GM12878 (cell line): ENCODE measurements at regions of chr11 and their contacts with region 1.

Region 1: GRCh38 chr11:106553304-106553703 is 465.0 kb downstream of the GUCY1A2 start:
- DNase-seq: no peak
- ATAC-seq: no peak
- H3K4me3 ChIP-seq: no peak overlapping the region
- H3K27ac ChIP-seq: no peak overlapping the region
- H3K4me1 ChIP-seq: no peaks in the 10 kb centered on the region
- H3K27me3 ChIP-seq: no peaks in the 10 kb centered on the region
- CTCF ChIP-seq: no peak
- EP300 ChIP-seq: no peak
- POLR2A ChIP-seq: no peak
- RAD21 ChIP-seq: no peak

Region 2: GRCh38 chr11:105693075-105693759 is 860.1 kb before region 1 on chr11:
- CTCF ChIA-PET with region 1: no interaction called
- POLR2A ChIA-PET with region 1: no interaction called
- RAD21 ChIA-PET with region 1: no interaction called
- SMC1A ChIA-PET with region 1: no interaction called
- in situ Hi-C with region 1: no loop called
- intact Hi-C with region 1: no loop called
- DNase-seq: no peak
- ATAC-seq: no peak
- H3K4me3 ChIP-seq: no peak overlapping the region
- H3K27ac ChIP-seq: no peak overlapping the region
- H3K4me1 ChIP-seq: no peaks in the 10 kb centered on the region
- H3K27me3 ChIP-seq: no peaks in the 10 kb centered on the region
- CTCF ChIP-seq: no peak
- EP300 ChIP-seq: no peak
- POLR2A ChIP-seq: no peak
- RAD21 ChIP-seq: no peak

Region 3: DNA sequence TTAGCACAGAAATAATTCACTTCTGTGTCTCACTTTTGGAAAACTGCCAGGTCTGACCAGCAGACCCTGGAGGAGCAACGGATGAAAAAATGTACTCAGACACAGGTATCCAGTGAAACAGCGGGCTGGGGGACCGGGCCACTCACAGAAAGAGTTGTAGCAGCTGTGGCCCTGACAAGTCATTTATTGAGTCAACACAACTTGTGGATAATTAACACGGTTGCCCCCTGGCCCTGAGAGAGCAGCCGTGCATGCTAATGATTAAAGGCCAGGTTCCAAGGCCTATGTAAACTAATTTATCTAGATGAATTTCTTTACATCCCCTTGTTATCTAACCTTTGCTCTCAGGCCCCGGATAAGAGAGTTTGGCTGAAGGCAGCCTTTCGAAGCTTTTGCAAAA is 344.5 kb before region 1 on chr11:
- CTCF ChIA-PET with region 1: no interaction called
- POLR2A ChIA-PET with region 1: no interaction called
- RAD21 ChIA-PET with region 1: no interaction called
- SMC1A ChIA-PET with region 1: no interaction called
- in situ Hi-C with region 1: no loop called
- intact Hi-C with region 1: no loop called
- DNase-seq: no peak
- ATAC-seq: peak; percentile 57
- H3K4me3 ChIP-seq: no peak overlapping the region
- H3K27ac ChIP-seq: no peak overlapping the region
- H3K4me1 ChIP-seq: no peaks in the 10 kb centered on the region
- H3K27me3 ChIP-seq: no peaks in the 10 kb centered on the region
- CTCF ChIP-seq: no peak
- EP300 ChIP-seq: no peak
- POLR2A ChIP-seq: no peak
- RAD21 ChIP-seq: no peak

Region 4: DNA sequence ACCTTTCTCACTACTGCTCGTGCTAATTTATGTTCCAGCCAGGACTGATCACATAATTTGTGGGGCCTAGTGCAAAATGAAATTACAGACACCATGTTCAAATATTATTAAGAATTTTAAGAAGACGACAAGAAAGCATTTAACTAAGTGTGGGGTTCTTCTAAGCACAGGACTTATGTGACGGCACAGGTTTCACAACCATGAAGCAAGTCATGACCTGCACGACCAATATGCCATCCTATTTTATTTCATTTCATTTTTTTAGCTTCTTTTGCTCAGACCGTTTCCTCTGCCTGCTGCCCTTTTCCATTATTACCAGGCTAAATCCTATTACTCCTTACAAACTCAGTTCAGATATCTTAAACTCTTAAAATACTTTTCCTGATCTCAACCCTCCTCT is 13.3 kb before region 1 on chr11:
- CTCF ChIA-PET with region 1: interaction called, 4 read pairs
- POLR2A ChIA-PET with region 1: no interaction called
- RAD21 ChIA-PET with region 1: no interaction called
- SMC1A ChIA-PET with region 1: no interaction called
- in situ Hi-C with region 1: no loop called
- intact Hi-C with region 1: loop called (anchors 2 kb)
- DNase-seq: no peak
- ATAC-seq: no peak
- H3K4me3 ChIP-seq: no peak overlapping the region
- H3K27ac ChIP-seq: no peak overlapping the region
- H3K4me1 ChIP-seq: no peaks in the 10 kb centered on the region
- H3K27me3 ChIP-seq: no peaks in the 10 kb centered on the region
- CTCF ChIP-seq: no peak
- EP300 ChIP-seq: no peak
- POLR2A ChIP-seq: no peak
- RAD21 ChIP-seq: no peak